Heart right ventricle (tissue), 16 donors: ENCODE measurements at regions of chr1 and their contacts with region 1.

Region 1: GRCh38 chr1:234610348-234611152 is 572 bp upstream of the IRF2BP2 start:
- DNase-seq: peak; percentile 95 to 97
- ATAC-seq: peak; percentile 55 to 86 (median 80)
- H3K4me3 ChIP-seq: peak overlapping the region; percentile 27 to 70 (median 58)
- H3K27ac ChIP-seq: peak overlapping the region; percentile 95 to 100 (median 99)
- H3K4me1 ChIP-seq: peaks cover 12 to 46% (median 41%) of the 10 kb centered on the region in 9 donors
- H3K27me3 ChIP-seq: no peaks in the 10 kb centered on the region
- CTCF ChIP-seq: peak in 3 of 9 donors; percentile 2 to 12 (median 4)

Region 2: DNA sequence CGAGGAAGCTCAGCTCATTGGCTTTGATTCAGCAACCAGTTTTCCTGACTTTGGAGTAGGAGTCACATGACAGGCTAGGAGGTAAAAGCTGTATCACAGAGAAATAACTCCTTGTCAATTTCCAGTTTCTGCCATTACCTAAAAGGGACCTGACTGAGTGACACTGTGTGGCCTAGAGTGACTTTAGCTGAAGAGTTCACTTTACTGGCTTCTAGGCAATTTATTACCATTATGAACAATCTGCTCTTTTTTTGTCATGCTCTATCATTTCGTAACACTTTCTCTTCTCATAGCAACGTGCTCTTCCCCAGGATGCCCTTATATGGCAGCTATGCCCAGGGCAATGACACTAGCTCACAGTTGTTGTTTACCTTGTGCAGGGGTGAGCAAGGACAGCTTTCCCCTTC is 889.4 kb before region 1 on chr1:
- intact Hi-C with region 1: no loop called
- DNase-seq: no peak
- ATAC-seq: peak in 4 of 8 donors; percentile 36 to 54 (median 52)
- H3K4me3 ChIP-seq: no peak overlapping the region
- H3K27ac ChIP-seq: peak overlapping the region in 9 of 10 donors; percentile 46 to 91 (median 83)
- H3K4me1 ChIP-seq: peaks cover 2 to 40% (median 20%) of the 10 kb centered on the region in 9 donors
- H3K27me3 ChIP-seq: no peaks in the 10 kb centered on the region
- CTCF ChIP-seq: no peak

Region 3: GRCh38 chr1:234683861-234684632 is 73.5 kb after region 1 on chr1:
- intact Hi-C with region 1: loop called in 1 of 10 experiments (anchors 1 kb)
- DNase-seq: peak in 1 of 2 donors; percentile 64
- ATAC-seq: peak; percentile 89 to 99 (median 94)
- H3K4me3 ChIP-seq: no peak overlapping the region
- H3K27ac ChIP-seq: peak overlapping the region in 9 of 10 donors; percentile 36 to 72 (median 65)
- H3K4me1 ChIP-seq: peaks cover 0 to 17% (median 8%) of the 10 kb centered on the region in 9 donors
- H3K27me3 ChIP-seq: no peaks in the 10 kb centered on the region
- CTCF ChIP-seq: no peak

Region 4: DNA sequence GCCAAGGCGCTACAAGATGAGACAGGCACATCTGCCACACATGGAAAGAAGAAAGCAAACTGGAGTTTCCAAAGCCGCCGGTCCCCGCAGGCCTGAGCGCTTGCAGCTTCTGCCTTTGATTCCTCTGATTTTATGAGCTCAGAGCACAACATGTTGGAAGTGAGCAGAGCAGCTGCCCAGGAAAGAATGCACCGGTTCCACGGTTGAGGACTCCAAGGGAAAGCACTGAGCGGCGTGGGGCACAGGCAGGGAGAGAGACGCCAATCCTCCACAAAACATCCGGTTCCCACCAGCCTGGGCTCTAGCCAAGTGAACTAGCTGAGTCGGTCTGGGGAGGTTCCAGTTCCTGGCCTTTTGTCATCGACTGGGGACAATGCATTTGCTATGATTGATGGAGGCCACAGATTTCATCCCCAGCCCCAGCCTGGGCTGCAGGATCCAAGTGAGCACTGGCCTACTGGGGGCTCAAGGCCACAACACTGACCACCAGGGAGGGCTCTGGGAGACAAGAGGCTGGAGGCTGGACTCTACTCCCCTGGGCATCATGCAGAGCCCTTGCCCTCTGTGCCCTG is 252.5 kb after region 1 on chr1:
- intact Hi-C with region 1: loop called in 1 of 10 experiments (anchors 10 kb)
- DNase-seq: peak; percentile 76 to 86
- ATAC-seq: peak; percentile 62 to 85 (median 76)
- H3K4me3 ChIP-seq: peak overlapping the region in 4 of 10 donors; percentile 4 to 17 (median 6)
- H3K27ac ChIP-seq: peak overlapping the region; percentile 60 to 93 (median 82)
- H3K4me1 ChIP-seq: peaks cover 6 to 51% (median 42%) of the 10 kb centered on the region in 9 donors
- H3K27me3 ChIP-seq: no peaks in the 10 kb centered on the region
- CTCF ChIP-seq: no peak

Region 5: GRCh38 chr1:234918181-234918841 is 307.8 kb after region 1 on chr1:
- intact Hi-C with region 1: loop called in 4 of 10 experiments (anchors 2 to 5 kb)
- DNase-seq: peak; percentile 54 to 72
- ATAC-seq: peak; percentile 34 to 74 (median 66)
- H3K4me3 ChIP-seq: no peak overlapping the region
- H3K27ac ChIP-seq: peak overlapping the region; percentile 80 to 97 (median 88)
- H3K4me1 ChIP-seq: peaks cover 21 to 86% (median 78%) of the 10 kb centered on the region in 9 donors
- H3K27me3 ChIP-seq: no peaks in the 10 kb centered on the region
- CTCF ChIP-seq: no peak

Region 6: DNA sequence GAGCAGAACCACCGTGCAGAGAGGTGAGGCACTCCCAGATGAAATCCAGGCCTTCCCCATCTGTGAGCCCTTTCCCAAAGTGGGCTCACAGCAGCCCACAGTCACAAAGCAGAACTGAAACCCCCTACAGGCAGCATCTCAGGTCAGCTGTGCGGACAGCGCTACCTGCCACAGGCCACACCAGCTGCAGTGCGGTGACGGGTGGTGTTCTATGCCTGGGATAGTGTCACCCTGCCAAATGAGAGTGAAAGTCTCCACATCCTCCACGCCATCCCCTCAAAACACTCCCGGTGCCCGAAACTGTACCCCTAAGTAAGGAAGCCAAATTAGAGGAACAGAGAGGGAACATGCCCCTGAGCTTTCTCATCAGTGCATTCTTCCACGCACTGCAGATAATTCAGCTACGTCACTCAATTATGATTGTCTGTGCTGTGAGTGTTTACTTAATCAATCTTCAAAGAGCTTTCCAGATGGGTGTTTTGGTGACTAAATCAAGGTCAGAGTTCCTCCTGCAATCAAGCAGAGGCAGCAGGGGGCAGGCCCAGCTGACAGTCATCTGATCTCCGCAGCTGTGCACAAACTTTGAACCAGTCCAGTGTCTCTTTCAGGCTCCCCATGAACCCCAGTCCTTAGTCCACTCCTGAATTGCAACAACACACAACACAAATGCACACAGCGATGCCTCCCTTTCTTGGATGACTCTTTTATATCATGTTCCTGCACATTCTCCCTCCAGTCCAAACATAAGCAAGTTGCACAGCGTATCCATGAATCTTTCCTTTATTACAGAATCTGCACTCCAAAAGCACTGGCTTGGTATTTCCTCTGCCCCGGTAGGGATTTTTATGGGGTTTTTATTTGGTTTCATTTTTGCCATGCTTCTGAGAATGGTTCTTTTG is 368.1 kb after region 1 on chr1:
- intact Hi-C with region 1: loop called in 4 of 10 experiments (anchors 5 to 10 kb)
- DNase-seq: no peak
- ATAC-seq: peak in 7 of 8 donors; percentile 28 to 52 (median 39)
- H3K4me3 ChIP-seq: peak overlapping the region in 2 of 10 donors; percentile 9 to 47
- H3K27ac ChIP-seq: peak overlapping the region; percentile 83 to 98 (median 88)
- H3K4me1 ChIP-seq: peaks cover 15 to 93% (median 54%) of the 10 kb centered on the region in 9 donors
- H3K27me3 ChIP-seq: no peaks in the 10 kb centered on the region
- CTCF ChIP-seq: peak in 3 of 9 donors; percentile 27 to 40 (median 28)